ENCODE measurements at regions of chr9 and their contacts with region 1.

Region 1: DNA sequence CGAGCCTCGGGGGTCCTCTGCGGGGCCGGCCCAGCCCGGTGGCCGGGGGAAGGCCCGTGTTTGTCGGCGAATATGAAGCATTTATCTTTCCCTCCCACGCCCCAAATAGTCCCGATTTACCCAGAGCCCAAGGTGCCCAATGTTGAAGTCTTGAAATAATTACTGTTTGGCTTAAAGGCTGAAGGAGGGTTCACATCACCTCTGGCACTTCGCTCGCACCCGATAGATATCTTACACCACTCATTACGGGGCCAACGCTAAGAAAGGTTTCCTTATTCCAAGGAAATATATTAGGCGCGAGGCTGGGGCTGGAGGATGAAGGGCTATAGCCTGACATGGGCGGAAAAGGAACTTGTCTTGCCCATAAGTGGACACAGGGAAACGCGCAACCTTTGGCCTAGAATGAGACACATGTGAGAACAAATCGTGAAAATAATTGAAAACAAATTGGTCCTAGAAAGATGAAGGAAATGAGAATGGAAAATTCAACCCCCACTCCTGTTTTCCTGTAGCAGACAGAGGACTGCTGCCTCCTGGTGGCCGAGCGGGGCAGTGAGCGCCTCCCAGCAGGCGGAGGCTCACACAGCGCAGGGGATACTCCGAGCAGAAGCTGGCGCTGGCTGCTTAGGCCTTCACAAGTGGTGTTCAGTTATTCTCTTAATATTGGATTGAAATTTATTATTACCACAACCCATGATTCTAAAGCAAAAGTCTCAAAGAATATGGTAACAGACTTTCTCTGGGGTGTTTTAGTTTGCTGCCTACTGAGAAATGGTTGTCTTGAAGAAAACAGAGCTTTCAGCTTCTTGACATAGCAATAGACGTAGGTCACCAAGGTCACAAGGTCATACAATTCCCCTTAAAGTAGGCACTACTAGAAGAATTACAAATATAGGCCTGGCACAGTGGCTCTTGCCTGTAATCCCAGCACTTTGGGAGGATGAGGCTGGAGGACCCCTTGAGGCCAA is 7.9 kb downstream of the CCL21 start:
- DNase-seq: peak; percentile 80
- ATAC-seq: peak; percentile 76
- H3K4me3 ChIP-seq: peak overlapping the region; percentile 12 to 63 (median 55)
- H3K4me3 Mint-ChIP-seq: peak overlapping the region; percentile 88
- H3K27ac ChIP-seq: no peak overlapping the region
- H3K27ac Mint-ChIP-seq: no peak overlapping the region
- H3K4me1 ChIP-seq: peaks cover 10 to 14% of the 10 kb centered on the region in 2 donors
- H3K4me1 Mint-ChIP-seq: peaks cover 14% of the 10 kb centered on the region
- H3K27me3 ChIP-seq: peaks cover 0 to 23% (median 16%) of the 10 kb centered on the region in 4 experiments
- H3K27me3 Mint-ChIP-seq: peaks cover 30% of the 10 kb centered on the region
- CTCF ChIP-seq: peak; percentile 97

Region 2: GRCh38 chr9:34611829-34612630 is 90.0 kb before region 1 on chr9 and contains the start of gene RPP25L:
- CTCF ChIA-PET with region 1: interaction called, 9 read pairs
- POLR2A ChIA-PET with region 1: no interaction called
- intact Hi-C with region 1: loop called (anchors 1 kb)
- DNase-seq: peak; percentile 91
- ATAC-seq: peak; percentile 95
- H3K4me3 ChIP-seq: peak within 1 kb of the TSS; percentile 69 to 97 (median 80)
- H3K4me3 Mint-ChIP-seq: peak within 1 kb of the TSS; percentile 91
- H3K27ac ChIP-seq: peak within 1 kb of the TSS; percentile 78 to 87
- H3K27ac Mint-ChIP-seq: peak within 1 kb of the TSS; percentile 90
- H3K4me1 ChIP-seq: peaks cover 7 to 21% of the 10 kb centered on the region in 2 donors
- H3K4me1 Mint-ChIP-seq: peaks cover 22% of the 10 kb centered on the region
- H3K27me3 ChIP-seq: no peaks in the 10 kb centered on the region
- H3K27me3 Mint-ChIP-seq: no peaks in the 10 kb centered on the region
- CTCF ChIP-seq: no peak
- total RNA-seq, gene RPP25L: 20.2 and 21.7 TPM in 2 replicates

Region 3: DNA sequence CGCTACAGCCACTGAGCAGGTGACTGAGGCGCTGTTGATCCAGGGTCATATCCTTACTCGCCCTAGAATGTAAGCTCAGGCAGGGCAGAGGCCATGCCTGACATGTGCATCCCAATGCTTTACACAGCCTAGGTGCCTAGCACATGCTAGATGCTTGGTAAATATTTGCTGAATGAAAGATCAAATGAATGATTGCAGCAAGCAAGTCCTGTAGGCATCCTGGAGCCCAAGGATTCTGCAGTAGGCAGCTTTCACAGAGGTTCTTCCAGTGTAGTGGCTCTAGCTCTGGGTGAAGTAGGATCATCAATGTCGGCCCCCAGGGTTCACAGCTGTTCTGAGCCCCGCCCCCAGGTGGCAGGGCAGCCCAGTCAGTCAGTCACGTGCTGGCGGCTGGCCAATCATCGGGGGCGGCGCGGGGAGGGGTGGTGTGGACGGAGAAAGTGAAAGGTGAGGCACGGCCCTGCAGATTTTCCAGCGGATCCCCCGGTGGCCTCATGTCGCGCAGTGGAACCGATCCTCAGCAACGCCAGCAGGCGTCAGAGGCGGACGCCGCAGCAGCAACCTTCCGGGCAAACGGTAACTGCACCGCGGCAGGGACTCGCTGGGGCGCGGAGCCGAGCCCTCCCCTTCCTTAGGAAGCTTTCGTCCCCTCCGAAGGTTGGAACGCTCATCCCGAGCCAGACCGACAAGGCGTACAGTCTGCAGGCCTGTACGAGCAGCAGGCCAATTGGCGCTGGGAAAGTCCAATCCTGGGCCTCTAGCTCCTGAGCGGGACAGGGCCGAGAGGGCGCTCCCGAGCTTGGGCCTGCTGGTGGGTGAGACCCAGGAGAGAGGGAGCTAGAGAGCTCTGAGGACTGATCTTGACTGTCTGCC is 55.6 kb before region 1 on chr9 and contains the start of gene GALT:
- CTCF ChIA-PET with region 1: interaction called, 18 read pairs
- POLR2A ChIA-PET with region 1: no interaction called
- intact Hi-C with region 1: loop called (anchors 1 kb)
- DNase-seq: peak; percentile 95
- ATAC-seq: peak; percentile 97
- H3K4me3 ChIP-seq: peak within 1 kb of the TSS; percentile 79 to 98 (median 87)
- H3K4me3 Mint-ChIP-seq: peak within 1 kb of the TSS; percentile 97
- H3K27ac ChIP-seq: peak within 1 kb of the TSS; percentile 47 to 64
- H3K27ac Mint-ChIP-seq: peak within 1 kb of the TSS; percentile 94
- H3K4me1 ChIP-seq: peaks cover 16 to 17% of the 10 kb centered on the region in 2 donors
- H3K4me1 Mint-ChIP-seq: peaks cover 28% of the 10 kb centered on the region
- H3K27me3 ChIP-seq: no peaks in the 10 kb centered on the region
- H3K27me3 Mint-ChIP-seq: no peaks in the 10 kb centered on the region
- CTCF ChIP-seq: peak; percentile 62
- total RNA-seq, gene GALT: 96.6 and 111 TPM in 2 replicates

Region 4: DNA sequence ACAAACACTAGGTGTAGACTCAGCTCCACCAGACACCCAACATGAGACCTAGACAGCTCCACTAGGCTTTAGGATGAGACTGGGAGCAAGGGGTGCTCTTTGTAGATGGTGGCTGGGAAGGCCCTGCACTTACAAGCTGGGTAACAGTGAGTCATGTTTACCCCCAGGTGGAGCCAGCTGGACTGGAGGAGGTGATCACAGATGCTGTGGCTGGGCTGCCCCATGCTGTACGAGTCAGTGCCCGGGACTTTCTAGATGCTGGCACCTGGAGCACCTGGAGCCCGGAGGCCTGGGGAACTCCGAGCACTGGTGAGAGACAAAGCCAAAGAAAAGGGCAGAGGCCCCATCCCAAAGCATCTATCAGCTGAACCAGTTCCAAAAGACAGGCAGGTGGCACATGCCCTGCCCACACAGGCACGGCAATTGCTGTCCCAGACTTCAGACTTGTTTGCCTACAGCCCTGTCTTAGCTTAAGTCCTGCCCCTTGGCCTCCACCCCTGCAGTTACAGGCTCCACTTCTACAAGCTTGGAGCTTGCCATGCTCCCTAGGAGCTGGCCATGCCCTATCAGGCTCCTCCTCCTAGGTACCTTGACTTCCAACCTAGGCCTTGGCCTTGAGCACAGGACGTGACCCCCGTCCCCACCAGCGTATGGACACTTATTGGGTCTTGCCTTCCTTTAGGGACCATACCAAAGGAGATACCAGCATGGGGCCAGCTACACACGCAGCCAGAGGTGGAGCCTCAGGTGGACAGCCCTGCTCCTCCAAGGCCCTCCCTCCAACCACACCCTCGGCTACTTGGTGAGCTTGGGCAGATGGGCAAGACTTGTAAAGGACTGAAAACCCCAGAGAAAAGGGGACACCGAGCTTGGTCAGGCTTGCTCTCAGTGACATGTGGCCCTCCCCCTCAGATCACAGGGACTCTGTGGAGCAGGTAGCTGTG is 42.2 kb before region 1 on chr9:
- CTCF ChIA-PET with region 1: interaction called, 10 read pairs
- POLR2A ChIA-PET with region 1: no interaction called
- intact Hi-C with region 1: loop called (anchors 1 kb)
- DNase-seq: no peak
- ATAC-seq: no peak
- H3K4me3 ChIP-seq: no peak overlapping the region
- H3K4me3 Mint-ChIP-seq: no peak overlapping the region
- H3K27ac ChIP-seq: no peak overlapping the region
- H3K27ac Mint-ChIP-seq: no peak overlapping the region
- H3K4me1 ChIP-seq: peaks cover 5 to 6% of the 10 kb centered on the region in 2 donors
- H3K4me1 Mint-ChIP-seq: peaks cover 9% of the 10 kb centered on the region
- H3K27me3 ChIP-seq: no peaks in the 10 kb centered on the region
- H3K27me3 Mint-ChIP-seq: peaks cover 3% of the 10 kb centered on the region
- CTCF ChIP-seq: no peak

Region 5: DNA sequence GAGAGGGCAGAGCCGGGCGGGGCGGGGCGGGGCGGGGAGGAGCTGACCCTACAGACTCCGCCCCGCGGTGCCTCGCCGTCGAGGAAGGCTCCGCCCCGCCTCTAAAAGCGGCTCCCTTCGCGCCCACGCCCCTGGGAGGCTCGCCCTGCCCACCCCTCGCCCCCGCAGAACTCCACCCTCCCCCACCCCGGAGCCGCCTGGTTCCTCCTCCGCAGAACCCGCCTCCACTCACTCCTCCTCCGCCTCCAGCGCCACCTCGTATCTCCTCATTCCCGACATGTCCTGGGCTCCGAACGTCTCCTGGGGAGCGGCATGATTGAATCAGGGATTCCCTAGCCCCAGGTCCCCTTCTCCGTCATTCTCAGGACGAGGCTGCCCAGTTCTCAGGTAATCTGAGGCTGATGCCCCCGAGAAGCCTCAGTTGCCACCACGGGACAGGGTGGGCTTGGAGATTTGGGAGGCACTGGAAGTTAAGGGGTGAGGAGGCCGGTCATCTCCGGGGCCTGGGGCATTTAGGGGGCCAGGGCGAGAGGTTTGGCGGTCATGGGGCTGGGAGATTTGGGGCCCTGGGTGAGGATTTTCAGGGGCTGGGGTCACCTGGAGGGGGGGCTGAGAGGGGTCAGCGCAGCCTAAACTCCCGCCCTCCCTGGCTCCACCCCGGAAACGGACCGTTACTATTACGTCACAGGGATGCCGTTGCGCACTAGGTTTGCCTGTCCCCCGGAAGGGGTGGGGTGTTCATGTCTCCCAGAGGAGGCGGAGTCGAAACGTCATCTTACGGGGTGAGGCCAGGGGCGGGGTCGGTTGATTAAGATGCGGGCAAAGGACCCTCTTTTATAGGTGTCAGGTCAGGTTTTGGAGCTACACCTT is 36.4 kb before region 1 on chr9:
- CTCF ChIA-PET with region 1: interaction called, 10 read pairs
- POLR2A ChIA-PET with region 1: no interaction called
- intact Hi-C with region 1: loop called (anchors 1 kb)
- DNase-seq: peak; percentile 93
- ATAC-seq: peak; percentile 90
- H3K4me3 ChIP-seq: peak overlapping the region; percentile 65 to 87 (median 83)
- H3K4me3 Mint-ChIP-seq: peak overlapping the region; percentile 94
- H3K27ac ChIP-seq: peak overlapping the region; percentile 86 to 93
- H3K27ac Mint-ChIP-seq: peak overlapping the region; percentile 94
- H3K4me1 ChIP-seq: peaks cover 10 to 18% of the 10 kb centered on the region in 2 donors
- H3K4me1 Mint-ChIP-seq: peaks cover 20% of the 10 kb centered on the region
- H3K27me3 ChIP-seq: no peaks in the 10 kb centered on the region
- H3K27me3 Mint-ChIP-seq: no peaks in the 10 kb centered on the region
- CTCF ChIP-seq: no peak

Region 6: GRCh38 chr9:34675048-34675714 is 26.9 kb before region 1 on chr9:
- CTCF ChIA-PET with region 1: interaction called, 15 read pairs
- POLR2A ChIA-PET with region 1: interaction called, 3 read pairs
- intact Hi-C with region 1: loop called (anchors 2 kb)
- DNase-seq: peak; percentile 55
- ATAC-seq: peak; percentile 54
- H3K4me3 ChIP-seq: no peak overlapping the region
- H3K4me3 Mint-ChIP-seq: no peak overlapping the region
- H3K27ac ChIP-seq: no peak overlapping the region
- H3K27ac Mint-ChIP-seq: no peak overlapping the region
- H3K4me1 ChIP-seq: no peaks in the 10 kb centered on the region
- H3K4me1 Mint-ChIP-seq: no peaks in the 10 kb centered on the region
- H3K27me3 ChIP-seq: peaks cover 0 to 2% (median 0%) of the 10 kb centered on the region in 4 experiments
- H3K27me3 Mint-ChIP-seq: no peaks in the 10 kb centered on the region
- CTCF ChIP-seq: peak; percentile 32

Region 7: DNA sequence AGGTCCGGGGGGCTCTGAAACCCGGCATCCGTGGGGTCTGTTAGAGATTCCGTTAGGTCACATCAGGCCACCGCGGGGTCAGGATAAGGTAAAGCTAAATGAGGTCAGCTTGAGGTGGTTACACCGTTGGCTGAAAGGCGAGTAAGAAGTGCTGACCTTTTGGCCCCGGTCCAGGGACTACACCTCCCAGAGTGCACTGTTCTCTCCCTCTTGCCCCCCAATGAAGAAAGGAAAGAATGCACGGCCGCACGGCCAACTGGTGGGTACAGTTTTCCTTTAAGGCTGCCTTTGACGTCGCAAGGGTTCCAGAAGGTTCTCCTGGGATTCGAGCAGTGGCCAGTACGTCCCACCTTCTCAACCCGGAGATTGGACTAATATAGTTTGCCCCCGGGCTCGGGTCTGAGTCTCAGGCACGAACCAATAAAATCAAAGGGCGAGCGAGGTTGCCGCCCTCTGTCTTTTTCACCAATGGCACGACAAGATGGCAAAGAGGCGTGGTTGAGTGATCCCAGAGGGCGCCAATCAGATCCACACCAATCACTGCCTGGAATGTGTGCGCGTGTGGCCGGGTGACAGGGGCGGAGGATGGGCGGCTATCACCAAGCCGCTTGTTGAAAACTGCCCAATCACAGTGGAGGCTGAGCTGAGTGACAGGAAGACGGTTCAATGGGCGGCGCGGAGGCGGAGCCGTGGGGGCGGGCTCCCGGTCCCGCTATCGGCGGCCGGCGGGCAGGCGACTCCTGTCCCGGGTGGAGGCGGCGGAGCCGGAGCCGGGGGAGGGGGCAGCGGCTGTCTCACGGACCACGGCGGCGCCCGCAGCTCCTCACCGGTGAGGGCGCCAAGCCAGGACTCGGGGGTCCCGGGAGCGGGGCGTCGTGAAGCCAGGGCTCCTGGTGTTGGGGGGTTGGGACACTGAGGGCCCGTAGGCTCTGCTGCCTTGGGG is 287.2 kb after region 1 on chr9 and contains the start of gene DNAJB5:
- CTCF ChIA-PET with region 1: no interaction called
- POLR2A ChIA-PET with region 1: no interaction called
- intact Hi-C with region 1: loop called (anchors 10 kb)
- DNase-seq: peak; percentile 98
- ATAC-seq: peak; percentile 96
- H3K4me3 ChIP-seq: peak within 1 kb of the TSS; percentile 74 to 95 (median 84)
- H3K4me3 Mint-ChIP-seq: peak within 1 kb of the TSS; percentile 94
- H3K27ac ChIP-seq: peak within 1 kb of the TSS; percentile 11 to 68
- H3K27ac Mint-ChIP-seq: peak within 1 kb of the TSS; percentile 78
- H3K4me1 ChIP-seq: peaks cover 42 to 51% of the 10 kb centered on the region in 2 donors
- H3K4me1 Mint-ChIP-seq: peaks cover 45% of the 10 kb centered on the region
- H3K27me3 ChIP-seq: no peaks in the 10 kb centered on the region
- H3K27me3 Mint-ChIP-seq: no peaks in the 10 kb centered on the region
- CTCF ChIP-seq: no peak
- total RNA-seq, gene DNAJB5: 1.0 and 2.4 TPM in 2 replicates

Measured in B cell (primary cell).